CD4-positive, alpha-beta memory T cell (primary cell): ENCODE measurements at regions of chr6 and their contacts with region 1.

Region 1: DNA sequence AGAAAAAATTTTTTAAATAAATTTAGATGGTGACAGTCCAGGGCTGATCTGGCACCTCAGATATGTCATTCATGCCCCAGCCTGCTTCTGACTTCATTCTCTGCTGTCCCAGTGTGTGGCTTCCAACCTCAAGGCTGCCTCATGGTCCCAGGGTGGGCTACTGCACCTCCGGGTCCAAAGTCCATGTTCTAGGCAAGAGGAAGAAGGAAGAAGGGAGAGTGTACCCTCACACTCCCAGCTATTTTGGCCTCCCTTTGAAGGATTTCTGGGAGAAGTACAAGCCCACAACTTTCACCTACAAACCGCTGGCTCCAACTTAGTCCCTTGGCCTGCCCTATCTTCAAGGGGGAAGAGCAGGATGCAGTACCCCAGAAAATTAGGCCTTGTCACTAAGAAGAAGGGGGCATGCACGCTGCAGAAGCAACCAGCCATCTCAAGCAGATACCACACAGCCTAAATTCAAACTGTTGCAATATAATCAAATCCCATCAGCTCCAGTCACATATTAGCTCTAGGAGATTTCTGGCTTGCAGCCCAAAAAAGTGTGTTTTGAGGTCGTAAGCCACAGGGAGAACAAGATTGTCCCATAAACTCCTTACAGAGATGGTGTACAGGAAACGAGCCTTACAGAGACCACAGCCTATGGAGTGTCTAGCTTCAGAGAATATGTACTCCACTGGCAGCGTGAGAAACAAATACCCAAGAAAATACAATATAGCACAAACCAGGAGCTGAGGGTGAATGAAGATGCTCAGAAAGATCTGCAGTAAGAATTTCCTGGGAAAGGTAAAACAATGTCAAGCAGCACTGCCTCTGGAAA is 906 bp upstream of the BTN3A2 start:
- DNase-seq: peak in 3 of 5 donors; percentile 40 to 44 (median 43)
- H3K4me3 ChIP-seq: peak overlapping the region; percentile 79 to 87
- H3K4me3 Mint-ChIP-seq: peak overlapping the region in 1 of 8 donors; percentile 21
- H3K27ac ChIP-seq: peak overlapping the region; percentile 96
- H3K27ac Mint-ChIP-seq: no peak overlapping the region
- H3K4me1 ChIP-seq: peaks cover 69% of the 10 kb centered on the region
- H3K4me1 Mint-ChIP-seq: peaks cover 45 to 56% (median 52%) of the 10 kb centered on the region in 4 donors
- H3K27me3 ChIP-seq: no peaks in the 10 kb centered on the region
- H3K27me3 Mint-ChIP-seq: no peaks in the 10 kb centered on the region

Region 2: GRCh38 chr6:26375270-26375669 is 11.2 kb after region 1 on chr6:
- CTCF ChIA-PET with region 1: interaction called, 3 read pairs
- POLR2A ChIA-PET with region 1: interaction called, 16 read pairs
- intact Hi-C with region 1: no loop called
- DNase-seq: no peak
- H3K4me3 ChIP-seq: no peak overlapping the region
- H3K4me3 Mint-ChIP-seq: peak overlapping the region in 1 of 8 donors; percentile 55
- H3K27ac ChIP-seq: no peak overlapping the region
- H3K27ac Mint-ChIP-seq: peak overlapping the region; percentile 46 to 95 (median 66)
- H3K4me1 ChIP-seq: peaks cover 30% of the 10 kb centered on the region
- H3K4me1 Mint-ChIP-seq: peaks cover 26 to 67% (median 42%) of the 10 kb centered on the region in 4 donors
- H3K27me3 ChIP-seq: no peaks in the 10 kb centered on the region
- H3K27me3 Mint-ChIP-seq: no peaks in the 10 kb centered on the region

Region 3: GRCh38 chr6:26401987-26402658 is 38.0 kb after region 1 on chr6 and contains the start of gene BTN3A1:
- CTCF ChIA-PET with region 1: no interaction called
- POLR2A ChIA-PET with region 1: interaction called, 3 read pairs
- intact Hi-C with region 1: loop called (anchors 1 kb)
- DNase-seq: peak; percentile 80 to 84 (median 81)
- H3K4me3 ChIP-seq: peak within 1 kb of the TSS; percentile 91 to 94
- H3K4me3 Mint-ChIP-seq: peak within 1 kb of the TSS; percentile 97 to 100 (median 99)
- H3K27ac ChIP-seq: peak within 1 kb of the TSS; percentile 89
- H3K27ac Mint-ChIP-seq: peak within 1 kb of the TSS; percentile 95 to 100 (median 99)
- H3K4me1 ChIP-seq: peaks cover 51% of the 10 kb centered on the region
- H3K4me1 Mint-ChIP-seq: peaks cover 41 to 58% (median 47%) of the 10 kb centered on the region in 4 donors
- H3K27me3 ChIP-seq: no peaks in the 10 kb centered on the region
- H3K27me3 Mint-ChIP-seq: no peaks in the 10 kb centered on the region
- total RNA-seq, gene BTN3A1: 255 to 262 TPM

Region 4: GRCh38 chr6:26457806-26458688 is 94.0 kb after region 1 on chr6 and contains the start of gene BTN2A1:
- CTCF ChIA-PET with region 1: no interaction called
- POLR2A ChIA-PET with region 1: no interaction called
- intact Hi-C with region 1: loop called (anchors 5 kb)
- DNase-seq: peak; percentile 76 to 86 (median 78)
- H3K4me3 ChIP-seq: peak within 1 kb of the TSS; percentile 90 to 95
- H3K4me3 Mint-ChIP-seq: peak within 1 kb of the TSS; percentile 96 to 100 (median 98)
- H3K27ac ChIP-seq: peak within 1 kb of the TSS; percentile 85
- H3K27ac Mint-ChIP-seq: peak within 1 kb of the TSS; percentile 91 to 99 (median 98)
- H3K4me1 ChIP-seq: peaks cover 47% of the 10 kb centered on the region
- H3K4me1 Mint-ChIP-seq: peaks cover 45 to 73% (median 57%) of the 10 kb centered on the region in 4 donors
- H3K27me3 ChIP-seq: no peaks in the 10 kb centered on the region
- H3K27me3 Mint-ChIP-seq: no peaks in the 10 kb centered on the region
- total RNA-seq, gene BTN2A1: 57.0 to 62.8 TPM

Region 5: GRCh38 chr6:26485112-26485780 is 121.2 kb after region 1 on chr6:
- CTCF ChIA-PET with region 1: no interaction called
- POLR2A ChIA-PET with region 1: no interaction called
- intact Hi-C with region 1: no loop called
- DNase-seq: no peak
- H3K4me3 ChIP-seq: no peak overlapping the region
- H3K4me3 Mint-ChIP-seq: no peak overlapping the region
- H3K27ac ChIP-seq: no peak overlapping the region
- H3K27ac Mint-ChIP-seq: no peak overlapping the region
- H3K4me1 ChIP-seq: no peaks in the 10 kb centered on the region
- H3K4me1 Mint-ChIP-seq: peaks cover 0 to 3% (median 0%) of the 10 kb centered on the region in 4 donors
- H3K27me3 ChIP-seq: no peaks in the 10 kb centered on the region
- H3K27me3 Mint-ChIP-seq: no peaks in the 10 kb centered on the region

Region 6: GRCh38 chr6:26596579-26597388 is 232.7 kb after region 1 on chr6 and contains the start of gene ABT1:
- CTCF ChIA-PET with region 1: interaction called, 5 read pairs
- POLR2A ChIA-PET with region 1: interaction called, 5 read pairs
- intact Hi-C with region 1: loop called (anchors 1 kb)
- DNase-seq: peak; percentile 95 to 98 (median 96)
- H3K4me3 ChIP-seq: peak within 1 kb of the TSS; percentile 76 to 98
- H3K4me3 Mint-ChIP-seq: no peak within 1 kb of the TSS
- H3K27ac ChIP-seq: peak within 1 kb of the TSS; percentile 91
- H3K27ac Mint-ChIP-seq: peak within 1 kb of the TSS in 3 of 7 donors; percentile 80 to 92 (median 88)
- H3K4me1 ChIP-seq: peaks cover 24% of the 10 kb centered on the region
- H3K4me1 Mint-ChIP-seq: peaks cover 0 to 16% (median 8%) of the 10 kb centered on the region in 4 donors
- H3K27me3 ChIP-seq: no peaks in the 10 kb centered on the region
- H3K27me3 Mint-ChIP-seq: peaks cover 15 to 22% of the 10 kb centered on the region in 2 donors
- total RNA-seq, gene ABT1: 33.5 to 34.8 TPM